Ascending aorta (tissue), 2 donors: ENCODE measurements at regions of chr1 and their contacts with region 1.

Region 1: GRCh38 chr1:59150577-59151391 is 146.1 kb upstream of the FGGY start:
- DNase-seq: peak; percentile 43 to 93
- H3K4me3 ChIP-seq: peak overlapping the region; percentile 41 to 52
- H3K27ac ChIP-seq: peak overlapping the region; percentile 73 to 81
- H3K4me1 ChIP-seq: peaks cover 0 to 30% of the 10 kb centered on the region in 2 donors
- H3K27me3 ChIP-seq: no peaks in the 10 kb centered on the region
- CTCF ChIP-seq: no peak

Region 2: DNA sequence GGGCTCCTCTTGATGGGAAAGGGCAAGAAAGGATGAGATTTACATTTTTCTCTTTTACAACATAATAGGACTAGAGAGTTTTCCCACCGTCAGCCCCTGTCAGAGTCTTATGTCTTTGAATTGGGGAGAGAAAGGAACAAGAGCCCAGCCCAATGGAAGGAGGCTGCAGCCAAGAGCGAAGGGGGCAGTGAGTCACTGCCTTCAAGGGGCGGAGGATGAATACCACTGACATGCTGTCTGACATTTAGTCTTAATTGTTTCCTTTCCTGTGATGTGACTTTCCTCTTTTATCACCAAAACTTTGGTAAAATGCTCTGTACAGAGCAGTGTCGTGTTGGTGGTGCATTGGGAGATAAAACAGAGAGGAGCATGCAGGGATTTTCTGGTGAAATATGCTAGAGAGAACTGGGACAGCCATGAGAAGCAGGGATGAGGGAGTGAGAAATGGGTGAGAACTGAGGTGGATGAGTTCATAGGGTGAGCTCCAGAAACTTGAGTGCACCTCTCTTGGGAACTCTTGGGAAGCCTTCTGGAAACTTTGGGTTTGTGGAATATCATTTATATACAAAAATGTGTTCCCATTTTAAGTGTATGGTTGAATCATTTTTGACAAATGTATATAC is 33.8 kb before region 1 on chr1:
- intact Hi-C with region 1: no loop called
- DNase-seq: no peak
- H3K4me3 ChIP-seq: no peak overlapping the region
- H3K27ac ChIP-seq: no peak overlapping the region
- H3K4me1 ChIP-seq: no peaks in the 10 kb centered on the region
- H3K27me3 ChIP-seq: no peaks in the 10 kb centered on the region
- CTCF ChIP-seq: no peak

Region 3: GRCh38 chr1:59178339-59179187 is 27.8 kb after region 1 on chr1:
- intact Hi-C with region 1: loop called (anchors 2 kb)
- DNase-seq: peak in 1 of 2 donors; percentile 72
- H3K4me3 ChIP-seq: no peak overlapping the region
- H3K27ac ChIP-seq: peak overlapping the region; percentile 70 to 75
- H3K4me1 ChIP-seq: peaks cover 5 to 18% of the 10 kb centered on the region in 2 donors
- H3K27me3 ChIP-seq: no peaks in the 10 kb centered on the region
- CTCF ChIP-seq: no peak

Region 4: DNA sequence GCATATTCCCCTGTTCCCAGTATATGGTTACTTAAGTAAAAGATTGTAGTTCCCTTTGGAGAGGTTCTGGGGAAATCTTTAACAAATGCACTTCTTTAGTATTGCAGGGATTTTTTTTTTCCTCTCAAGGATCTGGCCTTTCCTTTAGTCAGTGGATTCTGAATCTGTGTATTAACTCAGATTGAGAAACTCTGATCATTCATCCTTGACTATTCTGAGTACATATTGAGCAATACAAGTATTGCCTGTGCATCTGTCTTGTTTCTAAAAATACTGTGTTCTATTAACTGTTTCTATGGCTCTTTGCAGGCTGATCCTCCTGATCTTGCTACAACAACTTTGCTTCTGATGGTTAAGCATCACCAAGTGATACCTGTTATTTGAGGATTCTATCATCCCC is 78.4 kb after region 1 on chr1:
- intact Hi-C with region 1: loop called (anchors 5 kb)
- DNase-seq: no peak
- H3K4me3 ChIP-seq: no peak overlapping the region
- H3K27ac ChIP-seq: no peak overlapping the region
- H3K4me1 ChIP-seq: peaks cover 0 to 15% of the 10 kb centered on the region in 2 donors
- H3K27me3 ChIP-seq: no peaks in the 10 kb centered on the region
- CTCF ChIP-seq: no peak

Region 5: GRCh38 chr1:59367301-59368007 is 216.7 kb after region 1 on chr1:
- intact Hi-C with region 1: no loop called
- DNase-seq: peak; percentile 10 to 76
- H3K4me3 ChIP-seq: no peak overlapping the region
- H3K27ac ChIP-seq: peak overlapping the region; percentile 66 to 77
- H3K4me1 ChIP-seq: peaks cover 0 to 9% of the 10 kb centered on the region in 2 donors
- H3K27me3 ChIP-seq: no peaks in the 10 kb centered on the region
- CTCF ChIP-seq: no peak

Region 6: GRCh38 chr1:59393211-59394180 is 242.7 kb after region 1 on chr1:
- intact Hi-C with region 1: loop called (anchors 5 kb)
- DNase-seq: peak; percentile 58 to 94
- H3K4me3 ChIP-seq: no peak overlapping the region
- H3K27ac ChIP-seq: peak overlapping the region; percentile 91 to 93
- H3K4me1 ChIP-seq: peaks cover 7 to 30% of the 10 kb centered on the region in 2 donors
- H3K27me3 ChIP-seq: no peaks in the 10 kb centered on the region
- CTCF ChIP-seq: no peak

Region 7: GRCh38 chr1:59414406-59415133 is 263.8 kb after region 1 on chr1:
- intact Hi-C with region 1: no loop called
- DNase-seq: no peak
- H3K4me3 ChIP-seq: no peak overlapping the region
- H3K27ac ChIP-seq: no peak overlapping the region
- H3K4me1 ChIP-seq: peaks cover 0 to 6% of the 10 kb centered on the region in 2 donors
- H3K27me3 ChIP-seq: no peaks in the 10 kb centered on the region
- CTCF ChIP-seq: no peak